ENCODE measurements at regions of chr1 and their contacts with region 1.

Region 1: DNA sequence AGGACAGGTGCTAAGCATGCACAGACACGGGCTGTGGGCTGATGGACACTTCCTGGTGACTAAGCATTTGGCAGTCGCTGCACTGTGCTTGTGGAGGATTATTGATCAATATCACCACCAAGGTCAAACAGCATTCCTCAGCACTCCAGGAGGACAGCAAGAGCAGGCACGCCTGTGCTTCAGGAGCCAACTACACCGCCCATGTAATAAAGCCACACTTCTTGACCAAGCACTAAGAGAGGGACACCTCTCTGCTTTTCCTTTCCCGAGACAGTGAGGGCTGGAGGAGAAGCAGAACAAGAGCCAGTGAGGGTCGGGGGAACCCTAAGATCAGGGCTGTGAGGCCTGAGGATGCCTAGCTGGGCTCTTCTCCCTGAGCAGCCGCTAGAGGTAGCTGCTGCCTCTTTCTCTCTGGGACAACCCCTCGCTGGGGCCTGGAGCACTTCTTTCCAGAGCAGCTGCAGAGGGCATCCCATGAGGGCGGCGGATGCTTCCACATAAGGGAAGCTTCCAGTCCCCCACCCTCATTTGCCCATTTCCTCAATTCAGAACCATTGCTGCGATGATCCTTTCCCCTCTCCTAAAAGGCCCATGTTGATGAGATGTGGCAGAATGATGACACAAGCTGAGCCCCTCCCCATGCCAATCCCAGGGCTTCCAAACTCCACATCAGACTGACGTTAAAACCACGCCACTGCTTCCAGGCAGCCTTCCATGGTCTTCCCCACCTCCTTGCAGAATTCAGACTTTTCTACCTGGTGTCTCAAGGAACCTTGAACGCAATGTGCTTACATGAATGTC is 19.1 kb downstream of the RAB7B start:
- DNase-seq: peak; percentile 57 to 62
- ATAC-seq: peak; percentile 89 to 97
- H3K4me3 ChIP-seq: no peak overlapping the region
- H3K27ac ChIP-seq: no peak overlapping the region
- H3K4me1 ChIP-seq: peaks cover 4% of the 10 kb centered on the region; the same call in 1 of the 3 replicates
- CTCF ChIP-seq: peak; percentile 76
- EP300 ChIP-seq: no peak
- POLR2A ChIP-seq: no peak
- RAD21 ChIP-seq: peak; percentile 81 to 88

Region 2: DNA sequence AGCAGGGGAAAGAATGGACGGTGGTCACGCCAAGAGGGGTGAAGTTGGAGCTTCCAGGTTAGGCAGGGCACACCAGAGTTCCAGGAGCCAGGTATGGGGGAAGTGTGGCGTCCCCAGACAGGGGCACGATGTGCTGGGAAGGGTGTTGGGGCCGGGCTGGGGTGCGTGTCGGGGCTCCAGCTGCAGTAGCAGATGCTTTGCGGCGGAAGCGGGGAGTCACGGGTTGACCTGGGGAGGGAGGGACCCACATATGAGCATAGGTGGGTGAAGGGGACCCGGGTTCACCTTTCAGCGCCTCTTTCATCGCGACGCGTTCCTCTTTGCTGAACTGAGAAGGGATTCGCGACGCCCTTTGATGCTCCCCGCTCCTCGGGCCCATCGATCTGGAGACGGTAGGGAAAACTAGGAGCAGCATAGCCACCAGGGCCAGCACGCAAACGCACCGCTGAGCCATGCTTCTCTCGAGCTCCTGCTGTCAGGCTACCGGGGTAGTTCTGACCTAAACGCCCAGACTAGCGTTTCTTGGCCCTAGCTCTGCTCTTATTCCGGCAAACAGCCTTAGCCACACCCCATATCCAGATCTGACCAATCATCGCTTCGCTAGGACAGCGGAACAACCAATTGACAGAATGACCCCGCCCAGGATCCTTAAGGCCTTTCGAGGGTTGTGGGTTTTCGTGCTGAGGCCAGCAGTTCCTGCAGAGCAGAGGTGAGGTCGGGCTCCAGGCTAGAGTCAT is 134.3 kb before region 1 on chr1 and contains the start of gene PM20D1:
- CTCF ChIA-PET with region 1: no interaction called
- POLR2A ChIA-PET with region 1: no interaction called
- DNase-seq: no peak
- ATAC-seq: no peak; a peak in 1 of 6 replicates
- H3K4me3 ChIP-seq: no peak within 1 kb of the TSS
- H3K27ac ChIP-seq: no peak within 1 kb of the TSS
- H3K4me1 ChIP-seq: no peaks in the 10 kb centered on the region
- CTCF ChIP-seq: no peak
- EP300 ChIP-seq: no peak
- POLR2A ChIP-seq: no peak
- RAD21 ChIP-seq: no peak
- polyA plus RNA-seq, gene PM20D1: not detected in 2 replicates

Region 3: DNA sequence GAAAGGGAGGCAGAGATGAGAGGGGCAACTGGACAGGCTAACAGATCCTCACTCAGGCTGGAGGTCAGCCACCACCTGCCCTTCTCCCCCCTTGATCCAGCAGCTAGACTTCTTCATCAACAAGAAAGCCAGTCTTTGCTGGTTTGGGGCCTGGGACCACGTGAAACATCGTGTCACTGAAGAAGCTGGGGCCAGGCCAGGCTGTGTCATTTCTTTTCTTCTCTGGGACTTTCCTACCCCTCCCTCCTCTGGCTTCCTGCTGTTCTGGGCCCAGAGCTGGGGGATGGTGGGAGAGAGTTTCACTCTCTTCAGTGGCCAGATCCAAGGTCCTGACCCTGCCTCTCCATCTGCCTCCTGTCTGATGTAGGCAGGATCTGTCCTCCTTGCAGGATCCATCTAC is 22.7 kb before region 1 on chr1:
- CTCF ChIA-PET with region 1: interaction called, 84 read pairs
- POLR2A ChIA-PET with region 1: no interaction called
- DNase-seq: no peak
- ATAC-seq: no peak; a peak in 1 of 6 replicates
- H3K4me3 ChIP-seq: no peak overlapping the region
- H3K27ac ChIP-seq: 0 out of 6 replicates have a peak overlapping the region, but pooled peaks of 1 of the 2 experiments have one; percentile 1
- H3K4me1 ChIP-seq: no peaks in the 10 kb centered on the region
- CTCF ChIP-seq: no peak
- EP300 ChIP-seq: no peak
- POLR2A ChIP-seq: no peak
- RAD21 ChIP-seq: no peak

Region 4: DNA sequence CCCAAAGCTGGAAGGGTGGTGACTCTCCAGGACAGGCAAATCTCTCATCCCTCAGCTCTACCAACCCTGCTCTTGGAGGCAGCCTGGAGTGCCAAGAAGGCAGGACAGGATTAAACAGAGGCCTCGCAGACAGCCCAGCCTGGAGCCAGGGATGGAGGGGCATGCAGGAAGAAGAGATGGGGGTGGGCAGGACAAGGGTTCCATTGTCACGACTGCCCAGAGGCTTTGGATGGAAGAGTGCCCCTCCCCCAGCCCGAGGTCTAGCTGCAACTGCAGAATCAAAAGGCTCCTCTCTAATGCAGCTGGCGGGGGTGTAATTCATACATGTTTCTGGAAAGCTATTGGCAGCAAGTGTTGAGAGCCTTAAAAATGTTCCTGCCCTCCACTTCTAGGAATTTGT is 10.2 kb after region 1 on chr1:
- CTCF ChIA-PET with region 1: interaction called, 60 read pairs
- POLR2A ChIA-PET with region 1: no interaction called
- DNase-seq: no peak
- ATAC-seq: no peak
- H3K4me3 ChIP-seq: no peak overlapping the region
- H3K27ac ChIP-seq: no peak overlapping the region
- H3K4me1 ChIP-seq: no peaks in the 10 kb centered on the region
- CTCF ChIP-seq: no peak
- EP300 ChIP-seq: no peak
- POLR2A ChIP-seq: no peak
- RAD21 ChIP-seq: no peak

Region 5: GRCh38 chr1:206001476-206001888 is 17.4 kb after region 1 on chr1:
- CTCF ChIA-PET with region 1: interaction called, 40 read pairs
- POLR2A ChIA-PET with region 1: no interaction called
- DNase-seq: peak; percentile 53 to 90
- ATAC-seq: peak; percentile 90
- H3K4me3 ChIP-seq: no peak overlapping the region
- H3K27ac ChIP-seq: peak overlapping the region in 1 of 2 experiments; percentile 76; a peak in 3 of 6 replicates
- H3K4me1 ChIP-seq: peaks cover 24% of the 10 kb centered on the region
- CTCF ChIP-seq: no peak
- EP300 ChIP-seq: no peak
- POLR2A ChIP-seq: no peak
- RAD21 ChIP-seq: no peak